ENCODE measurements at regions of chr3 and their contacts with region 1.

Region 1: DNA sequence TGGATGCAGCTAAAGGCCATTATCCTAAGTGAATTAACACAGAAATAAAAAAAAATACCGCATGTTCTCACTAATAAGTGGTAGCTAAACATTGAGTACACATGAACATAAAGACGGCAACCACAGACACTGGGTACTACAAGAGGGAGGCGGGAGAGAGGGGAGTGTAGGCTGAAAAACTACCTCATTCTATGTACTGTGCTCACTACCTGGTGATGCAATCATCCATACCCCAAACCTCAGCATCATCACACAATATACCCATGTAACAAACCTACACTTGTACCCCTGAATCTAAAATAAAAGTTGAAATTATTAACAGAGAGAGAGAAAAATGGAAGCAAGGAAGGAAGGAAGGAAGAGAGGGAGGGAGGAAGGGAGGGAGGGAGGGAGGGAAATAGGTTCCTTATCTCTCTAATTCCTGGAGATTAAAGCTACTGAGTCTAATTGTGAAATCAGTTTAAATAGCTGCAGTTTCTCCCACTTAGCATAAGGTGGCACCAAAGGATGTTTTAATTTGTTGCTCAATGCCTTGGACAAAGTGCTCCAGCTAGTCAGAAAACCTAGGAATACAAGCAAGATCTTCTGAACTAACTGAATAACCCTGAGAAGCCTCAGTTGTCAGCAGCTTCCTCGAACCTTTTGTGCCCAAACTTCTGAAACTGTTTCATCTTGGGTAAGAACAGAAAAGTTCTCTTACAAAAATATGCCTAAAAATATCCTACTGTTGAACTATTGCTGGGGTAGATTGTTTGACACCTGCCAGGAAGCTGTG is 79.4 kb upstream of the ATP11B start:
- DNase-seq: no peak
- H3K4me3 Mint-ChIP-seq: no peak overlapping the region
- H3K27ac Mint-ChIP-seq: no peak overlapping the region
- H3K4me1 Mint-ChIP-seq: peaks cover 19% of the 10 kb centered on the region
- H3K27me3 Mint-ChIP-seq: peaks cover 9% of the 10 kb centered on the region

Region 2: DNA sequence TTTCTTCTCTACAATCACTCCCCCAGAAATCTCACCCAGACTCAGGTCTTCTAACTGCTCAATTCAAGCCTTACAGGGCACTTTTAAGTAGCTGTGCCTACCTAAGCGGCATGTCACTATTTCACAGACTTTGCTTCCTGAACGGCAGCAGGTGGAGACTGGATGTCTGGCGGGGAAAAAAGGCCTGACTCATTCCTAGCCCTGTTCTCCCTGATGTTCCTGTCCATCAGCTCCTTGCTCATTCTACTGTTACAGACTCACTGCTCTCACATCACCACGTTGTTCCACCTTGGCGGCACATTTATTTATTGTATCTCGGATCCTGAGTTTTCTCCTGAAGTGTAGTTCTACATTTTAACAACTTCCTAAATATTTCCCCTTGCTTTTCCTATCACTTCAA is 26.8 kb after region 1 on chr3:
- intact Hi-C with region 1: no loop called
- DNase-seq: no peak
- H3K4me3 Mint-ChIP-seq: no peak overlapping the region
- H3K27ac Mint-ChIP-seq: no peak overlapping the region
- H3K4me1 Mint-ChIP-seq: no peaks in the 10 kb centered on the region
- H3K27me3 Mint-ChIP-seq: peaks cover 5% of the 10 kb centered on the region

Region 3: GRCh38 chr3:182837855-182838454 is 124.0 kb after region 1 on chr3:
- intact Hi-C with region 1: loop called (anchors 1 kb)
- DNase-seq: no peak
- H3K4me3 Mint-ChIP-seq: no peak overlapping the region
- H3K27ac Mint-ChIP-seq: no peak overlapping the region
- H3K4me1 Mint-ChIP-seq: no peaks in the 10 kb centered on the region
- H3K27me3 Mint-ChIP-seq: no peaks in the 10 kb centered on the region

Region 4: GRCh38 chr3:182909318-182910040 is 195.5 kb after region 1 on chr3:
- intact Hi-C with region 1: loop called (anchors 10 kb)
- DNase-seq: no peak
- H3K4me3 Mint-ChIP-seq: no peak overlapping the region
- H3K27ac Mint-ChIP-seq: no peak overlapping the region
- H3K4me1 Mint-ChIP-seq: peaks cover 43% of the 10 kb centered on the region
- H3K27me3 Mint-ChIP-seq: no peaks in the 10 kb centered on the region

Region 5: GRCh38 chr3:183027276-183027675 is 313.3 kb after region 1 on chr3:
- intact Hi-C with region 1: loop called (anchors 10 kb)
- DNase-seq: no peak
- H3K4me3 Mint-ChIP-seq: no peak overlapping the region
- H3K27ac Mint-ChIP-seq: no peak overlapping the region
- H3K4me1 Mint-ChIP-seq: no peaks in the 10 kb centered on the region
- H3K27me3 Mint-ChIP-seq: no peaks in the 10 kb centered on the region